Aorta (tissue), 5 donors: ENCODE measurements at regions of chr16 and their contacts with region 1.

Region 1: GRCh38 chr16:56700195-56700594 is 17.9 kb downstream of the MT1X start:
- DNase-seq: no peak
- ATAC-seq: no peak
- H3K4me3 ChIP-seq: no peak overlapping the region
- H3K27ac ChIP-seq: no peak overlapping the region
- H3K4me1 ChIP-seq: no peaks in the 10 kb centered on the region
- H3K27me3 ChIP-seq: no peaks in the 10 kb centered on the region

Region 2: GRCh38 chr16:56506941-56507340 is 193.3 kb before region 1 on chr16:
- intact Hi-C with region 1: loop called in 1 of 2 experiments (anchors 5 kb)
- DNase-seq: no peak
- ATAC-seq: no peak
- H3K4me3 ChIP-seq: no peak overlapping the region
- H3K27ac ChIP-seq: no peak overlapping the region
- H3K4me1 ChIP-seq: no peaks in the 10 kb centered on the region
- H3K27me3 ChIP-seq: no peaks in the 10 kb centered on the region

Region 3: DNA sequence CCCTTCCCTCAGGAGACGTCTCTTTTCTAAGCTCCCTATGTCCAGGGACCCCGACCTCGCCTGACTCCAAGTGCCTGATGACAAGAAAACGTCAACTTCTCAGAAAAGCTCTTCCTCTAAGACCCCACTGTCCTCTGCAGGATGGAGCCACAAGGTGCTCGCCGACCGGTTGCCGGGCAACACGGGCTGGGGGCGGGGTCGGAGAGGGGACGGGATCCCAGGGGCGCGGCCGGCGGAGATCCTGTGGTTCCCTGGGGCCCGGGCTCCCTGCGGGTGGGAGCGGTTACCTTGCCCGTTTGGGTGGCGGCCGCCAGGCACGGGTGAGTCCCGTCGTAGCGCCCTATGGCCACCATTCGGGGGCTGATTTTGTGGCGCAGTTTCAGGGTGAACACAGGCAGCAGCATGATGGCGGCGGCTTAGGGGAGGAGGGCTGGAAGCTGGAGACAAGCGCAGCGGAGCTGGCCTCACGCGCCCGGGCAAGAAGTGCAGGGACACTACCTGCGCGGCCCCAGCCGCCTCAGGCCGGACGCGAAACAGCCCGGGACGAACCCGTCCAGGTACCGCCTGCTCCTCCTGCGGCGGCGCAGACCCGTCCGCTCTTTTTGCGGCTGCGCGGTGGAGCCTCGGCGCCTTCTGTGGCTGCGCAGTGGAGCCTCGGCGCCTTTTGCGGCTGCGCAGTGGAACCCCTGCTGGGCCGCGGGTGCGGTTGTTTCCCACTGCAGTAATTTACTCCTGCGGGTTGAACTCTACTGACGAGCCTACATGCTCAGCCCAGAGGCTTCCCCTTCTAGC is 180.5 kb before region 1 on chr16 and contains the start of gene BBS2:
- intact Hi-C with region 1: loop called in 1 of 2 experiments (anchors 5 kb)
- DNase-seq: peak; percentile 94 to 96
- ATAC-seq: peak; percentile 95
- H3K4me3 ChIP-seq: peak within 1 kb of the TSS; percentile 61 to 94
- H3K27ac ChIP-seq: peak within 1 kb of the TSS in 1 of 2 donors; percentile 64
- H3K4me1 ChIP-seq: peaks cover 3% of the 10 kb centered on the region in 2 donors
- H3K27me3 ChIP-seq: no peaks in the 10 kb centered on the region
- total RNA-seq, gene BBS2: 40.3 to 41.0 TPM

Region 4: DNA sequence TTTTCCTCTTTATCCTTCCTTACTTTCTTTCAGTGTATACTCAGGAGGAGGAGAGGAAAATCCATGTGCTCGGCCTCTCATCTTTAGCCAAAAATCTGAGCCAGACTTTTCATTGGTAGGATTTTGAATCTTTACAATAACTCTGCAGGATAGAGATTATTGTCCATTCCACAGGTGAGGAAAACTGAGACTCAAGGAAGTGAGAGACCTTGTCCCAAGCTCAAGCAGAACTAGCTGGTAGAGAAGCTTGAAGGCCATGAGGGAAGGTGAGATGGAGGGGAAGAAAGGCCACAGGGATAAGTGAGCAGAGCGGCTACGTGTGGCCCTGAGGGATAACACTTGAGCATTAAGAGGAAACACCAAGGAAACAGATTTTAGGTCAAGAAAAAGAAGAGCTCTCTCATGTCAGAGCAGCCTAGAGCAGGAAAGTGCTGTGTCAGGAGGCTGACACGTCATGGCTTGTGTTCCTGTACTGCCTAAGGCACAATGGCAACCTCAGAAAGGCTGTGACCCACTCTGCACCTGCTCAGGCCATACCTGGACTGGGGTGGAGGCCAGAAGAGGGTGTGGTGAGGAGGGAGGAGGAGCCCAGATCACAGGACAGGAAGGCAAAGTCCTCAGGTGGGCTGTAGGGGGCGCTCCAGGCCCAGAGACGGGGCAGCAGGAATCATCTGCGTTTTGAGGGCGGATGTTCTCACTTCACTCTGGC is 123.5 kb before region 1 on chr16:
- intact Hi-C with region 1: loop called in 1 of 2 experiments (anchors 5 kb)
- DNase-seq: peak; percentile 79 to 91
- ATAC-seq: peak; percentile 85
- H3K4me3 ChIP-seq: no peak overlapping the region
- H3K27ac ChIP-seq: no peak overlapping the region
- H3K4me1 ChIP-seq: no peaks in the 10 kb centered on the region
- H3K27me3 ChIP-seq: no peaks in the 10 kb centered on the region

Region 5: DNA sequence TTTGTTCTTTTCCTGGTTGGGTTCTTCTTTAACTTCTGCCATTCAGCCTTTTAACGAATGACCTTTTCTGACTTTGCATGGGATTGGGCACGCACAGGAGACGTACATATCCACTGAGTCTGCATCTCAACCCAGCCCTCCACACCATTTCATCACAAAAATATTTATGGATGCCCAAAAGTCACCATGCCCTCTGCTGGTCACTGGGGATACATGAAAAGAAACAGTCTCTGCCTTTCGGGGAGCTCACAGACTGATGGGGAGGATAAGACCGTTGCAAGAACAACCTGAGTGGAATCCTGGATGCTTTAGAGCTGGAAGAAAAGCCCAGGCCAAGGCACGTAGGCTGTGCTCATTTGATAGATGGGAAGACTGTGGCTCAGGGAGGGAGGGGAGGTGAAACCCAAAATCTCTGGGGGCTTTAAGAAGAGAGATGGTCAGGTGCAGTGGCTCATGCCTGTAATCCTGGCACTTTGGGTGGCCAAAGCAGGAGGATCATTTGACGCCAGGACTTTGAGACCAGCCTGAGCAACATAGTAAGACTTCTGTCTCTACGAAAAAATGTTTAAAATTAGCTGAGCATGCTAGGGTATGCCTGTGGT is 99.7 kb before region 1 on chr16:
- intact Hi-C with region 1: loop called (anchors 2 to 5 kb)
- DNase-seq: no peak
- ATAC-seq: peak; percentile 57
- H3K4me3 ChIP-seq: no peak overlapping the region
- H3K27ac ChIP-seq: no peak overlapping the region
- H3K4me1 ChIP-seq: no peaks in the 10 kb centered on the region
- H3K27me3 ChIP-seq: no peaks in the 10 kb centered on the region

Region 6: GRCh38 chr16:56673921-56674320 is 26.3 kb before region 1 on chr16:
- intact Hi-C with region 1: loop called in 1 of 2 experiments (anchors 2 kb)
- DNase-seq: no peak
- ATAC-seq: no peak
- H3K4me3 ChIP-seq: no peak overlapping the region
- H3K27ac ChIP-seq: no peak overlapping the region
- H3K4me1 ChIP-seq: no peaks in the 10 kb centered on the region
- H3K27me3 ChIP-seq: no peaks in the 10 kb centered on the region